Sigmoid colon (tissue), 7 donors: ENCODE measurements at regions of chr18 and their contacts with region 1.

Region 1: GRCh38 chr18:2932247-2933181 is 80.4 kb downstream of the LPIN2 start:
- DNase-seq: no peak
- H3K4me3 ChIP-seq: no peak overlapping the region
- H3K27ac ChIP-seq: no peak overlapping the region
- H3K4me1 ChIP-seq: peaks cover 0 to 12% (median 5%) of the 10 kb centered on the region in 4 donors
- H3K27me3 ChIP-seq: no peaks in the 10 kb centered on the region
- CTCF ChIP-seq: peak; percentile 57 to 79 (median 58)
- EP300 ChIP-seq: no peak
- POLR2A ChIP-seq: no peak

Region 2: DNA sequence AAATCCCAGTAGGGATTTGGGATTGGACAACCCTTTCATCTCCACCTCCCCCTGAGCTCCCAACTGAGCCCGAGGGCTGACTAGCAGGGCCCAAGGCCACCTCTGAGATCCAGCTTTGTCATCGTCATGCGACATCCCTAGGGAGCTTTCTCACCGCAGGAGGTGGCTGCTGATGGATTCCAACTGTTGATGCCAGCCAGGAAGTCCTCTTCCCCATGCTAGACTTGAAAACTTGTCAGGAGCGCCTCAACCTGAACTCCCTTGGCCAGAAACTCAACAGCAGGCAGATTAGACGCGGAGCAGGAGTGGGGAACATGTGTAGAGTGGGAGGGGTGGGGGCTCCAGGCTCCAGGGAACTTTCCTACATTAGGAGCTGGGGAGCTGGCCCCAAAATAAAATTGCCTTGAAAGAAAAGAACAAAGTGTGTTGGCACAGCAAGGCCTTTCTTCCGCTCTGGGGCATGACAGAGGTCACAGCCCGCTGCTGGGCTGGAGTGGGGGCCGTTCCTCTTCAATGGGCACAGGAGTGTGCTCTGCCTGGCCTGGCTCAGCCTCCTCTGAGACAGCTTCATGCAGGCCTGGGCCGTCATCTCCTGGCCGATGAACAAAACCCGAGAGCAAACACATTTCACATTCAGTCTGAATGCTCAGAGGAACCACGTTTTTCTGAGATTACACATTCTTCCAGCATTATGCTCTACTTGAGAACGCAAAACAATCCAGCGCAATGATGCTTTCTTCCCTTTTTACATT is 51.2 kb before region 1 on chr18:
- intact Hi-C with region 1: no loop called
- DNase-seq: peak; percentile 85
- H3K4me3 ChIP-seq: no peak overlapping the region
- H3K27ac ChIP-seq: peak overlapping the region in 2 of 4 donors; percentile 54 to 55
- H3K4me1 ChIP-seq: peaks cover 0 to 7% (median 0%) of the 10 kb centered on the region in 4 donors
- H3K27me3 ChIP-seq: no peaks in the 10 kb centered on the region
- CTCF ChIP-seq: no peak
- EP300 ChIP-seq: no peak
- POLR2A ChIP-seq: no peak

Region 3: DNA sequence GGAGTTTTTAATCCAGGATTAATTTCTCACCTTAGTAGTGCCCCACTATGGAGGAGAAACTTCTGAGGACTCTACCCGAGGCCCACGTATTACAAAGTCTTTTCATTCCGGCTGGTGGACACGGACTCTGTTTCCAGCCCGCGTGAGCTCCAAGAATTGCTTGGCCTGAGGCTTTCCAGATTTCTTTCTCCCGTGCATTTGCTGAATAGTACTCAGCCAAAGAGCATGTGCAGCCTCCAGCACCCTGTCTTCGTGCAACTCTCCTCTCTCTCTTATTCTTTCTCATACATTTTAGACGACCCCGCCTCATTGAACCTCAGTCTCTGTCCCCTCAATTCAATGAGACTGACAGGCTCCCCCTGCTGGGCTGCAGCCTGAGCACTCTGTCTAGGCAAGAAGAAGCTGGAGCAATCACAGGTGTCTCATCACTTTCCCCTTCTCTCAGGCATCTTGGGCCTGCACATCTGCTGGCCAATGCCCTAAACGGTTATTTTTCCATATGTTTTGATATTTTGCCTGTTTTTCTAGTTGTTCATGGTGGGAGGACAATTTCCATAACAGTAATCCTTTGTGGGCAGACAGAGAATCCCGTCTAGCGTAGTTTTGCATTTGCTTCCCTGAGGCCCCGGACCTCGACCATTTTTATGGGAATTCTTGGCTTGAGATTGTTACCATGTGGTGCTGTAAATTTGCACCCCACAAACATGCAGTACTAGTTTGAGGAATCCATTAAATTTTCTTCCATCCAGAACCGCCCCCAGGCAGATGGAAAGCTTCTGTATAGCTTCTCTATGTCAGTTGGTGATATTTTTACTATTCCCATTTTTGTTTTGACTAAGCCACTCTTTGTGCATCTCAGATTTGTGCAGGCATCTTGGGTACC is 130.5 kb after region 1 on chr18:
- intact Hi-C with region 1: loop called (anchors 1 kb)
- DNase-seq: peak; percentile 79
- H3K4me3 ChIP-seq: peak overlapping the region in 3 of 4 donors; percentile 3 to 28 (median 25)
- H3K27ac ChIP-seq: peak overlapping the region in 1 of 4 donors; percentile 10
- H3K4me1 ChIP-seq: peaks cover 0 to 18% (median 10%) of the 10 kb centered on the region in 4 donors
- H3K27me3 ChIP-seq: no peaks in the 10 kb centered on the region
- CTCF ChIP-seq: peak; percentile 51 to 83 (median 72)
- EP300 ChIP-seq: no peak
- POLR2A ChIP-seq: no peak

Region 4: DNA sequence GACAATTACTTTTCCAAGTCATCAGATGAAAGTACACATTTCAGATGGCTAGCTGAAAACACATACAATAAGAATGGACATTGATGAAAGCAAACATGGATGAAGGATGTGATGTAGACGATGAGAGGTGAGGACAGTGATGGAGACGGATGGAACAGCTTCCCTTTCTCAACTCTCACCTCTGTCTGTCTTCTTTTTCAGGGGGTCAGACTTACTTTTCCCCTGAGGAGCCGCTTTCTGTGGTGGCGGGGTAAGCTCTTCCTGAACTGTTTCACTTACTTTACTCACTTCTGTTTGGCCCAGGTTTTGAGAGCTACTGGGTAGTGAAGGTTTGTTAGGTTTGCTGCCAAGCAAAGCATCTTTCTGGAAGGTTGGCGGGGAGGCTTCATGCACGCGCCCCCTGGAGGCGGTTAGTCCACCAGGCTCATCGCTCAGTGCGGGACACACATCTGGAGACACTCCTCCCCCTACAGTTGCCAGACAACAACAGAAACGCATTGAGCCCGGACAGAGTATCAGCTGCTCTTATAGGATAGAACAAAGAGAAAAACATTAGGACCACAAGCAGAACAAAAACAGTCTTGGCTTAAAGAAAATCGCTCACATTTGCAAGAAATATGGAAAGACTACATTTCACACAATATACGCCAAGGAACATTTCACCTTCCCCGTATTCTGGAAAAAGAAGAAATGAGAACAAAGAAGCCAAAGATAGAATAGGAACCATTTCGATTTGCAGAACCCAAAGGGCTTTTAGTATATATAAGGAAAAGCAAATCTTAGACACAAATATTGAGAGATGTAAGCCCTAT is 196.7 kb after region 1 on chr18:
- intact Hi-C with region 1: loop called (anchors 1 kb)
- DNase-seq: peak; percentile 88
- H3K4me3 ChIP-seq: no peak overlapping the region
- H3K27ac ChIP-seq: no peak overlapping the region
- H3K4me1 ChIP-seq: peaks cover 0 to 9% (median 8%) of the 10 kb centered on the region in 4 donors
- H3K27me3 ChIP-seq: no peaks in the 10 kb centered on the region
- CTCF ChIP-seq: peak; percentile 31 to 72 (median 66)
- EP300 ChIP-seq: no peak
- POLR2A ChIP-seq: no peak

Region 5: DNA sequence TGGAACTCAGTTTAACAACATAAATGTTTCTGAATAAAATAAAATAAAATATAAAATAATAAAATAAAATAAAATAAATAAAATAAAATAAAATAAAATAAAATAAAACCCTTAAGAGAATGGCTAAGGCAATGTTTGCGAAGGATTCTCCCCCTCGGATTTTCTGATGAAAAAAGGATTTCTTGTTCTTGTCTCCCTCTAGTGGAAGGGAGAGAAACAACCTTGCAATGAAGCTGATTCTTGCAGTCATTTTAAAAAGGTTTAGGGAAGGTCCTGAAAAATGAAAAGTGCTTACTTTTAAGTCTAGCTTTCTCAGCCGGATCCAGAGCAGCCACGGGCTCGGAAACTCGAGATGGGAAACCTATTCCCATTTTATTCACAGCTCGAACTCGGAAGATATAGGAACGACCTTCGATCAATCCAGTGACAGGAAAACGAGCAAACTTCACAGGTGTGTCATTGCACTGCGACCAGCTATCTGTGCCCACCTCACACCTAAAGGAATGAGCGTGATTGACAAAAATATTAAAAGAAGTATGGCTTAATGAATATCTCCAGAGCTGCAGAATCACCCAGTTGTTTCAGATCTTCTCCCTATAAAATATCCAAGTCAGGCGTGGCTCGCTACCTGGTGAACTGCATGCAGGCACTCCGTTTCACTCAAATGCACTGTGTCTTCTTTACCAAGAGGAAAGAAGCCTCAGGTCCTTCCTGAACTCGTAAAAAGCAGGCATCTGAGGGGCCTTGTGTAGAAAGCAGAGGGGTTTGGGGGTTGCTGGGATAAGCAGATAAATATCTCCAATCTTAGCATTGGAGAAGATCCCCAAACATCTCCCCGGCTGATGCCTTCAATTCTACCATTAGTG is 219.1 kb after region 1 on chr18:
- intact Hi-C with region 1: loop called (anchors 5 kb)
- DNase-seq: no peak
- H3K4me3 ChIP-seq: no peak overlapping the region
- H3K27ac ChIP-seq: no peak overlapping the region
- H3K4me1 ChIP-seq: no peaks in the 10 kb centered on the region
- H3K27me3 ChIP-seq: no peaks in the 10 kb centered on the region
- CTCF ChIP-seq: peak in 3 of 4 experiments; percentile 51 to 79 (median 54)
- EP300 ChIP-seq: no peak
- POLR2A ChIP-seq: no peak